Left lung (tissue), 14 donors: ENCODE measurements at regions of chr7 and their contacts with region 1.

Region 1: GRCh38 chr7:148084138-148084537 is 506.4 kb upstream of the C7orf33 start:
- DNase-seq: peak in 2 of 4 donors; percentile 80 to 92
- ATAC-seq: peak; percentile 89
- H3K4me3 ChIP-seq: no peak overlapping the region
- H3K27ac ChIP-seq: no peak overlapping the region
- H3K4me1 ChIP-seq: no peaks in the 10 kb centered on the region
- H3K27me3 ChIP-seq: no peaks in the 10 kb centered on the region
- CTCF ChIP-seq: peak; percentile 36 to 50

Region 2: DNA sequence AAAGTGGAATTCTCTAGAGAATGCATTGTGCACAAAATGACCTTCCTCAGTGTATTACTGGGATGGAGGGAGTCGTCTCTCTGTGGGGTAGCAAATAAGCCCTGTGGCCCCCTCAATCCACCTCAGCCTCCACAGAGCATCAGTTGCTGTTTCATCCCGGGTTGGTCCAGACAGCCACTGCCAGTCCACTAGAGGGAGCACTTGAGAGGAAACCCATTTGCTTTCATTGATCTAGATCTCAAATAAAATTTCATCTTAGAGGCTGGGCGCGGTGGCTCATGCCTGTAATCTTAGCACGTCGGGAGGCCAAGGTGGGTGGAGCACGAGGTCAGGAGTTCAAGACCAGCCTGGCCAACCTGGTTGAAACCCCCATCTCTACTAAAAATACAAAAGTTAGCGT is 838.8 kb before region 1 on chr7:
- intact Hi-C with region 1: loop called in 1 of 2 experiments (anchors 10 kb)
- DNase-seq: peak in 2 of 4 donors; percentile 18 to 39
- ATAC-seq: peak; percentile 74
- H3K4me3 ChIP-seq: no peak overlapping the region
- H3K27ac ChIP-seq: no peak overlapping the region
- H3K4me1 ChIP-seq: no peaks in the 10 kb centered on the region
- H3K27me3 ChIP-seq: no peaks in the 10 kb centered on the region
- CTCF ChIP-seq: peak; percentile 44 to 58

Region 3: GRCh38 chr7:147595042-147595441 is 489.1 kb before region 1 on chr7:
- intact Hi-C with region 1: no loop called
- DNase-seq: no peak
- ATAC-seq: no peak
- H3K4me3 ChIP-seq: no peak overlapping the region
- H3K27ac ChIP-seq: no peak overlapping the region
- H3K4me1 ChIP-seq: no peaks in the 10 kb centered on the region
- H3K27me3 ChIP-seq: no peaks in the 10 kb centered on the region
- CTCF ChIP-seq: no peak

Region 4: GRCh38 chr7:148204639-148205304 is 120.6 kb after region 1 on chr7:
- intact Hi-C with region 1: no loop called
- DNase-seq: peak in 1 of 4 donors; percentile 21
- ATAC-seq: peak; percentile 89
- H3K4me3 ChIP-seq: no peak overlapping the region
- H3K27ac ChIP-seq: no peak overlapping the region
- H3K4me1 ChIP-seq: no peaks in the 10 kb centered on the region
- H3K27me3 ChIP-seq: no peaks in the 10 kb centered on the region
- CTCF ChIP-seq: no peak